ENCODE measurements at regions of chr3 and their contacts with region 1.

Region 1: GRCh38 chr3:69671082-69671952 is 67.9 kb upstream of the MITF start:
- DNase-seq: peak; percentile 36
- CTCF ChIP-seq: peak; percentile 54

Region 2: GRCh38 chr3:69200384-69201068 is 470.8 kb before region 1 on chr3:
- in situ Hi-C with region 1: no loop called
- DNase-seq: no peak
- CTCF ChIP-seq: no peak

Region 3: DNA sequence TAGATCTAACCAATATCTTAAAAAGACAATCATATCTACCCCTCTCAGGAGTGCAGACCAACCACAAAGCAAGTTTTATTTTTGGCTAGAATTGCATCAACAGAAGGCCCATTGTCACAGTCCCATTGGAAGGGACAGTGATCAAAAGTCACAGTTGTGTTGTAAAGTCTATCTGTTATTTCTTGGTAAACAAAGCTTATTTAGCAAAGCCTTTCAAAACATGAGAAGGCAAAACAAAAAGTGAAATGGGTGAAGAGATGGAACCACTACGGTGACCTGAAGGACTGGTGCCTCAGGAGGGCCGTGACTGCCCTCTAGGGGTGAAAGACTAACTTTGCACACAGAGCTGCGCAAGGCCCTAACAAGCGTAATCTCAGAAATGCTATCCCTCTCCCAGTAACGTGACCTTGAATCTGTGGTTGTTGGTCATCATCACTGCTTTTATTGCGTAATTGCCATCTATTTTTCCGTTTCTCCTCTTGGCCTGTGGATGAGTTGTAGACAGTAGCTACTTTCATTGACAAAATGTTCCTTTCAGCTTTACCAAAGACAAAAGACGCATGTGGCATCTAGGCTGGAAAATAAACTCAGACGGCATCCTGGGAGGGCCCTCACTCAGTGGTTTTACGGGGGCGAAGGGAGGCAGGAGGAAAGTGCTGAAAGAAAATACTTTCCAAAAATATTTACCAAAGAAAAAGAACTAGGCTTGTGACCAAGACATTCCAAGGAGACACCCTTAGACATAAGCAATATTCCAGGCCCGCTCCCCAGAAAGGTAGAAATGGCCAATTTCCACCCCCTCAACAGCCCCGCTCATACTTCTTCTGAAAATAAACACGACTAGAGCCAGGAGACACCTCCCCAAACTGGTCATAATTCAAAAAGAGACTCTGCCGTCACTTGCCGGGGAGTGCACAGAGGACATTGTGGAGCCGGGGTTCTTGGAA is 364.8 kb before region 1 on chr3:
- in situ Hi-C with region 1: loop called (anchors 25 kb)
- DNase-seq: peak; percentile 67
- CTCF ChIP-seq: peak; percentile 68

Region 4: GRCh38 chr3:70249509-70250160 is 578.3 kb after region 1 on chr3:
- in situ Hi-C with region 1: no loop called
- DNase-seq: no peak
- CTCF ChIP-seq: no peak

Measured in GM13976 (cell line).